CD4-positive, alpha-beta memory T cell (primary cell): ENCODE measurements at regions of chr20 and their contacts with region 1.

Region 1: GRCh38 chr20:59032023-59032712 is at the start of gene ATP5F1E:
- DNase-seq: peak; percentile 96 to 97 (median 96)
- H3K4me3 ChIP-seq: peak within 1 kb of the TSS; percentile 71 to 82
- H3K4me3 Mint-ChIP-seq: peak within 1 kb of the TSS; percentile 91 to 97 (median 94)
- H3K27ac ChIP-seq: peak within 1 kb of the TSS; percentile 82
- H3K27ac Mint-ChIP-seq: peak within 1 kb of the TSS; percentile 94 to 98 (median 96)
- H3K4me1 ChIP-seq: peaks cover 50% of the 10 kb centered on the region
- H3K4me1 Mint-ChIP-seq: peaks cover 42 to 63% (median 52%) of the 10 kb centered on the region in 4 donors
- H3K27me3 ChIP-seq: no peaks in the 10 kb centered on the region
- H3K27me3 Mint-ChIP-seq: no peaks in the 10 kb centered on the region
- total RNA-seq, gene ATP5F1E: 77.2 to 84.5 TPM

Region 2: GRCh38 chr20:58309575-58310290 is 722.4 kb before region 1 on chr20 and contains the start of gene RAB22A:
- CTCF ChIA-PET with region 1: no interaction called
- POLR2A ChIA-PET with region 1: interaction called, 4 read pairs
- intact Hi-C with region 1: loop called (anchors 5 kb)
- DNase-seq: peak; percentile 77 to 88 (median 83)
- H3K4me3 ChIP-seq: peak within 1 kb of the TSS; percentile 62 to 72
- H3K4me3 Mint-ChIP-seq: peak within 1 kb of the TSS; percentile 88 to 98 (median 94)
- H3K27ac ChIP-seq: peak within 1 kb of the TSS; percentile 87
- H3K27ac Mint-ChIP-seq: peak within 1 kb of the TSS; percentile 95 to 99 (median 99)
- H3K4me1 ChIP-seq: peaks cover 68% of the 10 kb centered on the region
- H3K4me1 Mint-ChIP-seq: peaks cover 40 to 71% (median 56%) of the 10 kb centered on the region in 4 donors
- H3K27me3 ChIP-seq: no peaks in the 10 kb centered on the region
- H3K27me3 Mint-ChIP-seq: no peaks in the 10 kb centered on the region
- total RNA-seq, gene RAB22A: 23.6 TPM

Region 3: GRCh38 chr20:58636961-58637421 is 395.2 kb before region 1 on chr20:
- CTCF ChIA-PET with region 1: no interaction called
- POLR2A ChIA-PET with region 1: no interaction called
- intact Hi-C with region 1: no loop called
- DNase-seq: no peak
- H3K4me3 ChIP-seq: no peak overlapping the region
- H3K4me3 Mint-ChIP-seq: no peak overlapping the region
- H3K27ac ChIP-seq: no peak overlapping the region
- H3K27ac Mint-ChIP-seq: peak overlapping the region in 1 of 7 donors; percentile 16
- H3K4me1 ChIP-seq: peaks cover 12% of the 10 kb centered on the region
- H3K4me1 Mint-ChIP-seq: peaks cover 7 to 17% (median 11%) of the 10 kb centered on the region in 4 donors
- H3K27me3 ChIP-seq: peaks cover 3% of the 10 kb centered on the region
- H3K27me3 Mint-ChIP-seq: peaks cover 0 to 8% of the 10 kb centered on the region in 2 donors

Region 4: DNA sequence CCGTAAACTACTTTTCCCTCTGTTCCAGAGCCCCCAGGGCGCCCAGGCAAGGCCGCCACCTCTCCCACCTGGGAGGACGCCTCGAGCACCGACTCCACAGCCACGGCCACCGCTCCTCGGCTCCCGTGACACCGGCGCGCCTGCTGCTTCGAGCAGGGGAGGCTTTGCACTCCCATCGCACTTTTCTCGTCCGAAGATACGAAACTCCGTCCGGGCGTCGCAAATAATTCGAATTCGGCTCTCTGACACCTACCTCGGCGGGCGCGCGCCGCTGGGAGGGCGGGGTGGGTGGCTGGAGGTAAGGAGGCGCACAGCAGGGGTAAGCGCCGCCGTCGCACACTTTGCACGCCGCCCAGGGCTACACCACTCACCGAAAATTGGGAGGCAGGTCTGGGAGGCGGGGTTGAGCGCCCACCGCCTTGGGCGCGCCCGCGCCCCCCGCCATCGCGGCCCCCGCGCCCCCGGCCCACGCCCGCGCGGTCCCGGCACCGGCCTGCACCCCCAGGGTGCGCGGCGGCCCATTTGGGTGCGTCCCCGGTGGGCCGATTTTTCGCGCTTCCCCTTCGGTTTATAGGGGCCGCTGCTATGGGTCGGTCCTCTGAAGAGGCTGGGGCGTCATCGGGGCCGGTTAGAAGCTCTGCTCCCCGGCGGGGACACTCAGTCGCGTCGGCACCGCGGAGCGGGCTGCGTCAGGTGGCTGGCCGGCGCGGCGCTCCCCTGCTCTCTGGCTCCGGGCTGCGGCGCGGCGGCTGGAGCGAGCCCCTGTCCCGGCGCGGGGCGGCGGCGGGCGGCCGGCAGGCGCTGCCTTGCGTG is 143.4 kb before region 1 on chr20:
- CTCF ChIA-PET with region 1: interaction called, 3 read pairs
- POLR2A ChIA-PET with region 1: interaction called, 69 read pairs
- intact Hi-C with region 1: loop called (anchors 1 kb)
- DNase-seq: peak; percentile 87 to 90 (median 89)
- H3K4me3 ChIP-seq: peak overlapping the region; percentile 12 to 64
- H3K4me3 Mint-ChIP-seq: peak overlapping the region; percentile 79 to 90 (median 85)
- H3K27ac ChIP-seq: peak overlapping the region; percentile 78
- H3K27ac Mint-ChIP-seq: peak overlapping the region; percentile 87 to 95 (median 90)
- H3K4me1 ChIP-seq: peaks cover 19% of the 10 kb centered on the region
- H3K4me1 Mint-ChIP-seq: peaks cover 9 to 25% (median 18%) of the 10 kb centered on the region in 4 donors
- H3K27me3 ChIP-seq: no peaks in the 10 kb centered on the region
- H3K27me3 Mint-ChIP-seq: no peaks in the 10 kb centered on the region

Region 5: DNA sequence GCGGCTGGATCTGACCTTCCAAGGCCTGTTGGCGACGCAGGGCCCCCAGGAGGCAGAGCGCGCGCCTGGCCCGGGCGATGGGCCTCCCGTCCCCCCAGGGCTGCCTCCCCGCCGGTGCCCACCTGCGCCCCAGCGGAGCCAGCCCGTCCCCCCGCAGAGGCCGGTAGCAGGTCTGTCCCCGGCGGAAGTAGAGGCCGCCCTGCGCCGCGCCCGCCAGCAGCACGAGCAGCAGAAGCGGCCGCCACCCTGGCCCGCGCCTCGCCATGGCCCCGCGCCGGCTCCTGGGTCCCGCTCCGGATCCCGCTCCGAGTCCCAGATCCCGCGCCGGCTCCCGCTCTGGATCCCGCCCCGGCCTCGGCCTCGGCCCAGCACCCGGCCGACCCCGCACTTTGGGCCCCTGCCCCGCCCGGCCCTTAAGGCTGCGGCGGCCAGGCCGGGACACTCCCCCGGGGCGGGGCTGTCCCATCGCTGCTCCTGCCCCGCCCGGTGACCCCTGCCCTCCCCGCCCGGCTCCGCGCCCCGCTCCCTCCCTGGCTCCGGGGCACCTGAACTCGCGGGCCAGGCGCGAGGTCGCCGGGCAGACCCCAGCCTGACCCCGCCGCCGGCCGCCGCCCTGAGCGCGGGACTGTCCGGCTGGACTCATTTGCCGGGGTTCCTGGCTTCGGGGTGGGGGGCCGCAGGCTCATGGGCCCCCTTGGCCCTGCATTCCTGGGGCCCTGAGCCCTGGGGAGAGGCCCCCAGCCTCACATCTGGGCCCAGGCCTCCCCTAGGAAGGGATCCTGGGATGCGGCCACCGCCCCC is 25.1 kb before region 1 on chr20 and contains the start of gene CTSZ:
- CTCF ChIA-PET with region 1: interaction called, 3 read pairs
- POLR2A ChIA-PET with region 1: interaction called, 23 read pairs
- intact Hi-C with region 1: no loop called
- DNase-seq: peak in 3 of 5 donors; percentile 18 to 53 (median 36)
- H3K4me3 ChIP-seq: peak within 1 kb of the TSS; percentile 3 to 52
- H3K4me3 Mint-ChIP-seq: peak within 1 kb of the TSS; percentile 72 to 86 (median 81)
- H3K27ac ChIP-seq: peak within 1 kb of the TSS; percentile 62
- H3K27ac Mint-ChIP-seq: peak within 1 kb of the TSS in 5 of 7 donors; percentile 29 to 89 (median 68)
- H3K4me1 ChIP-seq: peaks cover 37% of the 10 kb centered on the region
- H3K4me1 Mint-ChIP-seq: peaks cover 27 to 54% (median 36%) of the 10 kb centered on the region in 4 donors
- H3K27me3 ChIP-seq: no peaks in the 10 kb centered on the region
- H3K27me3 Mint-ChIP-seq: no peaks in the 10 kb centered on the region
- total RNA-seq, gene CTSZ: 34.8 to 37.3 TPM

Region 6: GRCh38 chr20:59042796-59043660 is 10.9 kb after region 1 on chr20:
- CTCF ChIA-PET with region 1: interaction called, 6 read pairs
- POLR2A ChIA-PET with region 1: interaction called, 104 read pairs
- intact Hi-C with region 1: loop called (anchors 1 kb)
- DNase-seq: peak; percentile 92 to 96 (median 95)
- H3K4me3 ChIP-seq: peak overlapping the region; percentile 65 to 91
- H3K4me3 Mint-ChIP-seq: peak overlapping the region; percentile 84 to 95 (median 92)
- H3K27ac ChIP-seq: peak overlapping the region; percentile 92
- H3K27ac Mint-ChIP-seq: peak overlapping the region; percentile 91 to 97 (median 97)
- H3K4me1 ChIP-seq: peaks cover 50% of the 10 kb centered on the region
- H3K4me1 Mint-ChIP-seq: peaks cover 31 to 59% (median 48%) of the 10 kb centered on the region in 4 donors
- H3K27me3 ChIP-seq: no peaks in the 10 kb centered on the region
- H3K27me3 Mint-ChIP-seq: no peaks in the 10 kb centered on the region

Region 7: GRCh38 chr20:59081030-59081429 is 48.9 kb after region 1 on chr20:
- CTCF ChIA-PET with region 1: no interaction called
- POLR2A ChIA-PET with region 1: no interaction called
- intact Hi-C with region 1: no loop called
- DNase-seq: no peak
- H3K4me3 ChIP-seq: no peak overlapping the region
- H3K4me3 Mint-ChIP-seq: no peak overlapping the region
- H3K27ac ChIP-seq: no peak overlapping the region
- H3K27ac Mint-ChIP-seq: no peak overlapping the region
- H3K4me1 ChIP-seq: no peaks in the 10 kb centered on the region
- H3K4me1 Mint-ChIP-seq: no peaks in the 10 kb centered on the region
- H3K27me3 ChIP-seq: no peaks in the 10 kb centered on the region
- H3K27me3 Mint-ChIP-seq: peaks cover 10 to 17% of the 10 kb centered on the region in 2 donors

Region 8: DNA sequence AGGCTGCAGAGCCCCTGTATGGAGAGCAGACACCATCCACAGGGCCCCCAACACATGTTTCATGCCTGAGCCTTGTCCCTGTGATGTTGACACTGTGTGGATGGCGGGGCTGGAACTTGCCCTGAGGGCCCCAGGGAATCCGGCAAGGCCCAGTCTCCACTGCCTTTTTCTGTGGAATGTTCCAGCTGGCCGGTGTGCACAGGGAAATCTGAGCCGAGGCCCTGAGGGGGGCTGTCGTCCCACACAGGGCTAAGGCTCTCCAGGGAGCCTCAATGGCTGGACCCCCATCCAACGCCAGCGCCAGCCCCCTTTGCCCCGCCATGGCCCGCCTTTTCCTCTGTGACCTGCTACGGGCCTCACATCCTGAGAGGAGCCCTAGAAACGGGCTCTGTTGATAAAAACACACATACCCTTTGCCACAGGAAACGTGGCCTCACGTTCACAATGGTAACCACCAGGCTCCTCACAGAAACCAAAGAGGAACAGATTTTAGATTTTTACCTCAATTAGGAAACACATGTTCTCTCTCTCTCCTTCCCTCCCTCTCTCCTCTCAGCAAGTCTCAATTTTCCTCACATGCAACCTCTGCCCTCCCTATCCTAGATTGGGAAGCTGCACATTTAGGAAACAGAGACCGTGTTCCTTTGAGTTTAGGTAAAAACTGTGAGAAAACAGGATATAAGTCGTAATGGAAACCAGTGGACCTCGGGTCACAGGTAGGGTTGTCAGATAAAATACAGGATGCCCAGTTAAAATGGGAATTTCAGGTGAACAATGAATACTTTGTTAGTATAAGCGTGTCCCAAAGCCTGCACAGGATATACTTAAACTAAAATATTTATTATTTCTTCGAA is 117.7 kb after region 1 on chr20:
- CTCF ChIA-PET with region 1: no interaction called
- POLR2A ChIA-PET with region 1: interaction called, 16 read pairs
- intact Hi-C with region 1: no loop called
- DNase-seq: peak; percentile 88 to 93 (median 91)
- H3K4me3 ChIP-seq: peak overlapping the region in 1 of 2 donors; percentile 2
- H3K4me3 Mint-ChIP-seq: peak overlapping the region; percentile 73 to 91 (median 80)
- H3K27ac ChIP-seq: peak overlapping the region; percentile 93
- H3K27ac Mint-ChIP-seq: peak overlapping the region; percentile 96 to 100 (median 100)
- H3K4me1 ChIP-seq: peaks cover 92% of the 10 kb centered on the region
- H3K4me1 Mint-ChIP-seq: peaks cover 72 to 97% (median 88%) of the 10 kb centered on the region in 4 donors
- H3K27me3 ChIP-seq: no peaks in the 10 kb centered on the region
- H3K27me3 Mint-ChIP-seq: no peaks in the 10 kb centered on the region